ENCODE measurements at regions of chr15 and their contacts with region 1.

Region 1: GRCh38 chr15:80769829-80770705 is 9.1 kb upstream of the CEMIP start:
- DNase-seq: no peak
- H3K4me3 ChIP-seq: no peak overlapping the region
- H3K27ac ChIP-seq: no peak overlapping the region
- H3K4me1 ChIP-seq: no peaks in the 10 kb centered on the region
- H3K27me3 ChIP-seq: no peaks in the 10 kb centered on the region
- CTCF ChIP-seq: no peak

Region 2: DNA sequence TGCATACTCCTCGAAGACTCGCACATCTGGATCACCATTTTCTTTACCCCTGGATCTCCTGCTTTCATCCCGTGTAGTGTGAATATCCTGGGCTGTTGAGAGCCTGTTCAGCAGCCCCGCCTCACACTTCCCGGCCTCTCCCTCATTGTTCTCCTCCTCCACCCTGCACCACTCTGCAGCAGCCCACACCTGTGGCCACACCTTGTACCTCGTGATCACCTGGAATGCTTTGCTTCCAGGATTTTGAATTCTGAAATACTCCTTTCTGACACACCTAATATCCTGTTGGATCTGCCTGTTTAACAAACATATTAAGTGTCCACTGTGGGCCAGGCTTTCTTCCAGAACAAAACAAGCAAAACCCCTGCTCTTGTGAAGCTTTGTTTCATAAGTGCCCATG is 60.5 kb before region 1 on chr15:
- CTCF ChIA-PET with region 1: no interaction called
- dilution Hi-C with region 1: loop called (anchors 5 kb)
- in situ Hi-C with region 1: no loop called
- intact Hi-C with region 1: no loop called
- DNase-seq: peak; percentile 75
- H3K4me3 ChIP-seq: no peak overlapping the region
- H3K27ac ChIP-seq: peak overlapping the region; percentile 68
- H3K4me1 ChIP-seq: peaks cover 24% of the 10 kb centered on the region
- H3K27me3 ChIP-seq: no peaks in the 10 kb centered on the region
- CTCF ChIP-seq: no peak

Measured in mammary epithelial cell (primary cell).